CD4-positive, alpha-beta memory T cell (primary cell): ENCODE measurements at regions of chr13 and their contacts with region 1.

Region 1: DNA sequence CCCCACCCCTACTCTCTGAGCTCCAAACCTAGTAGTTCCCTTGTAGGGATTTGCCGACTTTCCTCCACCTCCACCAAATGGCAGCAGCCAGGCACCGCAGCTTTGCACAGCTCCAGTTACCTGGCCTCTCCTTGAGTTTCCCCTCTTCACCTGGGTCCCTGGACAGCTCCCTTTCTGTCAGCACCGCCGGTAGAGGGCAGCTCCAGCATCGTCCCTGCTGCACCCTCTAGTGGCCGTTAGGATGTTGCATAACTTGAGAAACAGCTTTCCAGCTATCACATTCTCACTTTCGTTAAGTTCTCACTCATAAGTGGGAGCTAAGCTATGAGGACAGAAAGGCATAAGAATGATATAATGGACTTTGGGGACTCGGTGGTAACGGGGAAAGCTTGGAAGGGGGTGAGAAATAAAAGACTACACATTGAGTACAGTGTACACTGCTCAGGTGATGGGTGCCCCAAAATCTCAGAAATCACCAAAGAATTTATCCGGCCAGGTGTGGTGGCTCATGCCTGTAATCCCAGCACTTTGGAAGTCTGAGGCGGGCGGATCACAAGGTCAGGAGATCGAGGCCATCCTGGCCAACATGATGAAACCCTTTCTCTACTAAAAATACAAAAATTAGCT is 60.4 kb upstream of the OLFM4 start:
- DNase-seq: peak; percentile 40 to 52 (median 43)
- H3K4me3 ChIP-seq: no peak overlapping the region
- H3K4me3 Mint-ChIP-seq: no peak overlapping the region
- H3K27ac ChIP-seq: no peak overlapping the region
- H3K27ac Mint-ChIP-seq: no peak overlapping the region
- H3K4me1 ChIP-seq: no peaks in the 10 kb centered on the region
- H3K4me1 Mint-ChIP-seq: no peaks in the 10 kb centered on the region
- H3K27me3 ChIP-seq: no peaks in the 10 kb centered on the region
- H3K27me3 Mint-ChIP-seq: peaks cover 9 to 10% of the 10 kb centered on the region in 2 donors

Region 2: GRCh38 chr13:52665325-52665724 is 302.9 kb before region 1 on chr13:
- CTCF ChIA-PET with region 1: interaction called, 7 read pairs
- POLR2A ChIA-PET with region 1: no interaction called
- intact Hi-C with region 1: loop called (anchors 2 kb)
- DNase-seq: peak in 4 of 5 donors; percentile 14 to 39 (median 19)
- H3K4me3 ChIP-seq: no peak overlapping the region
- H3K4me3 Mint-ChIP-seq: no peak overlapping the region
- H3K27ac ChIP-seq: no peak overlapping the region
- H3K27ac Mint-ChIP-seq: peak overlapping the region in 3 of 7 donors; percentile 27 to 72 (median 42)
- H3K4me1 ChIP-seq: no peaks in the 10 kb centered on the region
- H3K4me1 Mint-ChIP-seq: peaks cover 4 to 6% (median 4%) of the 10 kb centered on the region in 4 donors
- H3K27me3 ChIP-seq: no peaks in the 10 kb centered on the region
- H3K27me3 Mint-ChIP-seq: no peaks in the 10 kb centered on the region

Region 3: DNA sequence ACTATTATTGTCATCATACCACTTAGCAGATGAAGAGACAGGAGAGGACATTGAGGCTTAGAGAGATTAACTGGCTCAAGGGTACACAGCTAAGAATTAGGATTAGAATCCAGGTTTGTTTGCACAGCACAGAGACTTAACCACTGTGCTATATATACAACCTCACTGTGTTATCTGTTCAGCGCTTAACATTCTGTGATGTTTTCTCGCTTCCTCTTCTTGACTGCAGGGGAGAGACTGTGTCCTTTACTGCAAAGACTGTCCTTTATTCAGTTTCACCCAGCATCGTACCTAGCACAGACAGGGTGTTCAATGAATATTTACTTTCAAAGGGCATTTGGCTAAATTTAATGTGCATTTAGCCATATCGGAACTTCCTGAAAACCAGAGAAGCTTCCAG is 64.9 kb before region 1 on chr13:
- CTCF ChIA-PET with region 1: no interaction called
- POLR2A ChIA-PET with region 1: no interaction called
- intact Hi-C with region 1: no loop called
- DNase-seq: no peak
- H3K4me3 ChIP-seq: no peak overlapping the region
- H3K4me3 Mint-ChIP-seq: no peak overlapping the region
- H3K27ac ChIP-seq: no peak overlapping the region
- H3K27ac Mint-ChIP-seq: no peak overlapping the region
- H3K4me1 ChIP-seq: no peaks in the 10 kb centered on the region
- H3K4me1 Mint-ChIP-seq: no peaks in the 10 kb centered on the region
- H3K27me3 ChIP-seq: no peaks in the 10 kb centered on the region
- H3K27me3 Mint-ChIP-seq: peaks cover 7 to 15% of the 10 kb centered on the region in 2 donors

Region 4: DNA sequence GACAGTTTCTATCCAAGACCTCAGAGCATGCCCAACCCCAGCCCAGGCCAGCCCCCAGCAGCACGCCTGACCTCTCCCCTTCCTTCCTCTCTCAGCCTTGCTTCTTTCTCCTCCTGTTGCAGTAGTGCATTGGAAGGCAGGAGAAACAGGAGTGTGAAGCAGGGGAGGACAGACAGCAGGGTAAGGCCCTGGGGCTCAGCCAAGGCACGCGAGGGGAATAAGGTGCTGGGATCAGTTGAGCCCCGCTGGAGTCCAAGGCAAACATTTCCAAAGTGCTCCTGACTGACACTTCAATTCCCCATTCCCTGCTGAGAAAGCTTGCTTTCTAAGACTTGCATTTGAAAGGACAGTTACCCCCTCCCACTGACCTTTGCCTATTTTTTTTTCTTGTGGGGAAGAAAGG is 12.7 kb before region 1 on chr13:
- CTCF ChIA-PET with region 1: interaction called, 17 read pairs
- POLR2A ChIA-PET with region 1: no interaction called
- intact Hi-C with region 1: no loop called
- DNase-seq: no peak
- H3K4me3 ChIP-seq: no peak overlapping the region
- H3K4me3 Mint-ChIP-seq: no peak overlapping the region
- H3K27ac ChIP-seq: no peak overlapping the region
- H3K27ac Mint-ChIP-seq: no peak overlapping the region
- H3K4me1 ChIP-seq: no peaks in the 10 kb centered on the region
- H3K4me1 Mint-ChIP-seq: no peaks in the 10 kb centered on the region
- H3K27me3 ChIP-seq: no peaks in the 10 kb centered on the region
- H3K27me3 Mint-ChIP-seq: peaks cover 0 to 2% of the 10 kb centered on the region in 2 donors

Region 5: GRCh38 chr13:52980695-52981094 is 12.5 kb after region 1 on chr13:
- CTCF ChIA-PET with region 1: interaction called, 61 read pairs
- POLR2A ChIA-PET with region 1: no interaction called
- intact Hi-C with region 1: no loop called
- DNase-seq: no peak
- H3K4me3 ChIP-seq: no peak overlapping the region
- H3K4me3 Mint-ChIP-seq: no peak overlapping the region
- H3K27ac ChIP-seq: no peak overlapping the region
- H3K27ac Mint-ChIP-seq: no peak overlapping the region
- H3K4me1 ChIP-seq: no peaks in the 10 kb centered on the region
- H3K4me1 Mint-ChIP-seq: no peaks in the 10 kb centered on the region
- H3K27me3 ChIP-seq: no peaks in the 10 kb centered on the region
- H3K27me3 Mint-ChIP-seq: peaks cover 2% of the 10 kb centered on the region in 2 donors

Region 6: DNA sequence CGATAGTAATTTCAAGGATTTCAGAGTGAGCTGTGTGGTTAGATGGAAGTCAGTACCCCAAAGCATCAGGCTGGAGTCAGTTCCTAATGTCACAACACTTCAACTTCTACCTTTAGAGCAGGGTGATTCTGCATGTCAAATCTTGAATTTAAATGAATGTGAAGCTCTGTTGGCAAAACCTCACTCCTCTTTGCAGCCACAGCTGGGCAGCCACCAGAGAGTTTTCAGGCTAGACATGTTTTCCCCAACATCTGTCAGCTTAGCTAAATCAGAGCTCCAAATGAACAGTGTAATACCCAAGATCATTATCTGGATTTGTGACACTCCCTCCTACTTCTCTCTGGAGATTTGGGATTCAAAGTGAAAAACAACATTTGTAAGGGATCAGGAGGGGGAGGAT is 26.7 kb after region 1 on chr13:
- CTCF ChIA-PET with region 1: interaction called, 14 read pairs
- POLR2A ChIA-PET with region 1: no interaction called
- intact Hi-C with region 1: no loop called
- DNase-seq: no peak
- H3K4me3 ChIP-seq: no peak overlapping the region
- H3K4me3 Mint-ChIP-seq: no peak overlapping the region
- H3K27ac ChIP-seq: no peak overlapping the region
- H3K27ac Mint-ChIP-seq: no peak overlapping the region
- H3K4me1 ChIP-seq: no peaks in the 10 kb centered on the region
- H3K4me1 Mint-ChIP-seq: peaks cover 0 to 3% (median 0%) of the 10 kb centered on the region in 4 donors
- H3K27me3 ChIP-seq: no peaks in the 10 kb centered on the region
- H3K27me3 Mint-ChIP-seq: peaks cover 0 to 7% of the 10 kb centered on the region in 2 donors

Region 7: DNA sequence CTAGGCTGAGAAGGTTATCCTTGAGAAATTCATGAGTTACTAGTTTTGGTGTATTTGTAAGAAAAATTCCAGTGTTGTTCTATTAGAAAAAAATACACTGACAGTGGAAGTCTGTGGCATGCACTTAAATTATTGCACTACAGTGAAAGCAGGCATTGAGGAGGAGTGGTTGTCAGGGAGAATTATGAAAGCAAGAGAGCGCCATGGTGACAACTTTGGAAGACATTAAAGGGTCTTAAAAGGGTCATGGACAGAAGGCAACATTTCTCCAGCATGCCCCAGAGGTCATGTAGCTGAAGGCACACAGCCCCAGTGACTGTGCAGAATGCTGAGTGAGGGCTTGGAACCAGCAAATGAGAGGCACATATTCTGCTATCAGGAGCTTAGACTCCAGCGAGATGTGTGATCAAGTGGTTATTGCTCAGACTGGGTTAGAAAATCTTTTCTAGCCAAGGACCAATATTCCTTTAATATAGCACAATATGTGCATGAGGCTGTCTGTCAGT is 353.2 kb after region 1 on chr13:
- CTCF ChIA-PET with region 1: no interaction called
- POLR2A ChIA-PET with region 1: no interaction called
- intact Hi-C with region 1: no loop called
- DNase-seq: no peak
- H3K4me3 ChIP-seq: no peak overlapping the region
- H3K4me3 Mint-ChIP-seq: no peak overlapping the region
- H3K27ac ChIP-seq: no peak overlapping the region
- H3K27ac Mint-ChIP-seq: no peak overlapping the region
- H3K4me1 ChIP-seq: no peaks in the 10 kb centered on the region
- H3K4me1 Mint-ChIP-seq: no peaks in the 10 kb centered on the region
- H3K27me3 ChIP-seq: no peaks in the 10 kb centered on the region
- H3K27me3 Mint-ChIP-seq: no peaks in the 10 kb centered on the region